ENCODE measurements at regions of chr1 and their contacts with region 1.

Region 1: DNA sequence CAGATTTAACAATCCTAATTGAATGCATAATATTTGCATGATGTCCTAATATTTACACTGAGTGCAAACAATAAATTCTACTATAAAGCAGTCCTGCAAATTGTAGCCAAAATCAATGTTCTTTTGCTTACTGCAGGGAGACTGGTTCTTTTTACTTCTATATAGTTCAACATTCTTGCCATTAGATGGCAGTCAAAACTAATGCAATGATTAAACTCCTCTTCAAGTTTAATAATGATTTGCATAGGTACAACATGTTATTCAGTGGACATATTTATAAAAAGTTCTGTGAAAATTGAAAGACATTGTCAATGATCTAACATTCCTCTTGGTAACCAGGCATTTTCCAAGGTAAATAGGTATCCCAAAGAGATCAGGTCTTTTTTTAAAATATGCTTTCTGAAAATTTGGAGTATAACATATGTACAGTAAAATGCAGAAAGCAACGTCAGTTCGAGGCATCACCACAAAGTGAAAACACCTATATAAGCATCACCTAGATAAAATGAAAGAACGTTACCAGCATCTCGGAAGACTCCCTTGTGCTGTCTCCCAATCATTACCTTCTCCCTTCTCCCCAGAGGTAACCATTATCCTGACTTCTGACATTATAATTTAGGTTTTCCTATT is 9.8 kb upstream of the FNBP1L start:
- DNase-seq: no peak
- ATAC-seq: peak; percentile 72 to 75
- H3K4me3 ChIP-seq: no peak overlapping the region
- H3K27ac ChIP-seq: no peak overlapping the region
- H3K4me1 ChIP-seq: no peaks in the 10 kb centered on the region
- H3K27me3 ChIP-seq: no peaks in the 10 kb centered on the region
- CTCF ChIP-seq: peak; percentile 38 to 74 (median 68)
- POLR2A ChIP-seq: no peak

Region 2: GRCh38 chr1:93629099-93630059 is 191.3 kb after region 1 on chr1:
- in situ Hi-C with region 1: loop called in 2 of 4 experiments (anchors 10 kb)
- intact Hi-C with region 1: loop called (anchors 1 kb)
- DNase-seq: peak; percentile 55 to 62
- ATAC-seq: peak; percentile 83 to 90
- H3K4me3 ChIP-seq: no peak overlapping the region
- H3K27ac ChIP-seq: peak overlapping the region in 3 of 4 donors; percentile 18 to 77 (median 37)
- H3K4me1 ChIP-seq: peaks cover under 1 to 8% of the 10 kb centered on the region in 2 donors
- H3K27me3 ChIP-seq: no peaks in the 10 kb centered on the region
- CTCF ChIP-seq: peak; percentile 75 to 93 (median 80)
- POLR2A ChIP-seq: no peak

Region 3: DNA sequence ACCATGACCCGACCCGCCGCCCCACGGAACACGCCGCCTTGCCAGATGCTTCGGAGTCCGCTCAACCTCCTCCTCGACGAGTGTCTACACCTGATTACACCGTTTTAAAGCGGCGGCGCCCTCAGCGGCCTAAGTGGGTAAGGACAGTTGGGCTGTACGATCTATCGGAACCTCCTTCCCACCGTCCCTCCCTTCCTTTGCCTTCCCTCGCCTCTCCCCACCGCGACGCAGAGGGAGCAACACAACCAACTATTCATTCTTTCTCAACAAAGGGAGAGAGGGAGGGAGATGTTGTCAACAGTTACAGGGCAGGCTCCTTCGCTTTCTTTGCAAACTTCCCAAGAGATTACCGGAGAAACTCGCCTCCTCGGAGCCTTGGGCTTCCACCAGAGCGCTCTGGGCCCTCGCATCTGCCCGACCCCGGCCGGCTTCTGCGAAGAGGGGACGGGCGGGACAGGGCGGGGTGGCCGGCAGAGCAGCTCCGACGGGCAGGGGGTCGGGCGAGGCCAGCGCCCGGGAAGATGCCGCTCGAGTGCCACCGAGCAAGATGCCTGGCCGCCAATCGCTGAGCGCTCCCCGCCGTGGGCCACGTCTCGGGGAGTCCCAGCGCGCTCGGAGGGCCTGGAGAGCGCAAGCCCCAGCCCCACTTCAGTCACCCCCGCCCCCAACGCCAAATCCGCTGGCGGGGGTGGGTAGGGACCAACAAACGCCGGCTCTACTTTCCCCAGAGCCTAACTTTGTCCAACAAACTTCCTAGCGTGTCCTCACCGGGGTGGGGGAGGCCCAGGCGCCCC is 242.9 kb after region 1 on chr1:
- in situ Hi-C with region 1: no loop called
- intact Hi-C with region 1: loop called (anchors 1 kb)
- DNase-seq: peak; percentile 57 to 63
- ATAC-seq: peak; percentile 83 to 85
- H3K4me3 ChIP-seq: peak overlapping the region; percentile 71 to 87 (median 82)
- H3K27ac ChIP-seq: peak overlapping the region; percentile 73 to 80 (median 77)
- H3K4me1 ChIP-seq: peaks cover 0 to 21% of the 10 kb centered on the region in 2 donors
- H3K27me3 ChIP-seq: no peaks in the 10 kb centered on the region
- CTCF ChIP-seq: peak; percentile 42 to 66 (median 63)
- POLR2A ChIP-seq: peak; percentile 9 to 29

Region 4: GRCh38 chr1:93814059-93814794 is 376.1 kb after region 1 on chr1:
- in situ Hi-C with region 1: loop called in 2 of 4 experiments (anchors 5 to 10 kb)
- intact Hi-C with region 1: loop called (anchors 5 kb)
- DNase-seq: peak; percentile 17 to 39
- ATAC-seq: peak; percentile 84 to 90
- H3K4me3 ChIP-seq: no peak overlapping the region
- H3K27ac ChIP-seq: no peak overlapping the region
- H3K4me1 ChIP-seq: peaks cover 0 to 3% of the 10 kb centered on the region in 2 donors
- H3K27me3 ChIP-seq: no peaks in the 10 kb centered on the region
- CTCF ChIP-seq: peak; percentile 84 to 93 (median 92)
- POLR2A ChIP-seq: no peak

Measured in gastrocnemius medialis (tissue), 4 donors.